Sigmoid colon (tissue), 7 donors: ENCODE measurements at regions of chr7 and their contacts with region 1.

Region 1: DNA sequence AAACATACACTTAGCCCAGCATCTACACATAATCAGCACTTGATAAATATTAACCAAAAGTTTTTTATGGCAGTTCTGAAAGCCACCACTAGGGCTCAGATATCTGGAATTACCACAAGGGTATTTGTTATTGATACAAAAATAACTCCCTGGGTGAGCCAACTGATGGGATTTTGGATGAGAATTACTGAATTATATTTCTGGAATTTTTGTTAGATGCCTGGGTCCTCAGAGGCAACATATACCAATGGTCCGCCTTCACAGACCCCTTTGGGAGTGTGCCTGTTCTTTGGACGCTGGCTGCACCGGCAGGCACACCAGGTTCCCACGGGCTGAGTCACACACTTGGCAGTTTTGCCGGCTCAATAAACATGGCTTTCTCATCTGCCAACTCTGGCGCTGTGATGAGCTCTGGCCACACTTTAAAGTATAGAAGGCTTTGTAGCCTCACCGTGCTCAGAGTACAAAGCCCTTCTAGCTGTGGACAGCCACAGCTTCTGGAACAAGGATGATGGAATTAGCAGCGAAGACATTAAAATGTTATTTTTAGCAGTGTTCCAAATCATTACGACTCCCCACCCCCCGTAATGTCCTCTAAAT is 24.5 kb upstream of the EEPD1 start:
- DNase-seq: peak; percentile 95
- H3K4me3 ChIP-seq: no peak overlapping the region
- H3K27ac ChIP-seq: peak overlapping the region; percentile 64 to 79 (median 74)
- H3K4me1 ChIP-seq: peaks cover 0 to 34% (median 26%) of the 10 kb centered on the region in 4 donors
- H3K27me3 ChIP-seq: no peaks in the 10 kb centered on the region
- CTCF ChIP-seq: peak; percentile 70 to 95 (median 84)
- EP300 ChIP-seq: peak in 3 of 4 donors; percentile 12 to 56 (median 33)
- POLR2A ChIP-seq: no peak

Region 2: DNA sequence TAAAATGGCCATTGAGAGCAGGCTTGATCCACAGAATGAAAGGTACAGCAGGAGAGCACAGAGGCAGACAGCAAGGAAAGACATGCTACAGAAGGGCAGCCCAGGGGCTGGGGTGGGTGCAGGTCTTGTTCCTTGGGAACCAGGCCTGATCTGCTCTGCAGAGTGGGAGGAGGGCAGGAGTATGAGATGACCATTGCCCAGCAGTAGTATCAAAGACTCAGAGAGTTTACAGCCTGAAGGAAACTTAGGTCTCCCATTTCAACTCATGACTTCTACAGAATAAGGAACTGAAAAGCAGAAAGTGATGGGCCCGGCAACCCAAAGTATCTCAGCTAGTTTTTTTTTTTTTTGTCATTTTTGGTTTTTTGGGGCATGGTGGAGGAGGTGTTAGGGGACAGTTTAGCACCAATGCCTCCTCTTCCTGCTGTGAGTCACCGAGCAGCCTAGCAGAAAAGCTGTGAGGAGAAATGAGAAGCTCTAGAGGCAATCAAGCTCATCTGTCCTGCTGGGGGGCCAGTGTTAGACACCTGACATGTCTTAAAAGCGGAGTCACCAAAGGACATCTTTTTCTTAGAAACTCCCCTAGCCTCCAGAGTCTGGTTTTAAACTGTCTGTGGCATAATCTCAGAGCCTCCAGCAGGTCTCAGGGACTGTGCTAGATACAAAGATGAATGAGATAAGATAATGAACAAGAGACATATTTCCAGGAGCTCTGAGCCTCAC is 399.3 kb before region 1 on chr7:
- intact Hi-C with region 1: loop called (anchors 10 kb)
- DNase-seq: no peak
- H3K4me3 ChIP-seq: no peak overlapping the region
- H3K27ac ChIP-seq: peak overlapping the region in 3 of 4 donors; percentile 77 to 88 (median 80)
- H3K4me1 ChIP-seq: peaks cover 0 to 49% (median 42%) of the 10 kb centered on the region in 4 donors
- H3K27me3 ChIP-seq: no peaks in the 10 kb centered on the region
- CTCF ChIP-seq: no peak
- EP300 ChIP-seq: no peak
- POLR2A ChIP-seq: no peak

Region 3: DNA sequence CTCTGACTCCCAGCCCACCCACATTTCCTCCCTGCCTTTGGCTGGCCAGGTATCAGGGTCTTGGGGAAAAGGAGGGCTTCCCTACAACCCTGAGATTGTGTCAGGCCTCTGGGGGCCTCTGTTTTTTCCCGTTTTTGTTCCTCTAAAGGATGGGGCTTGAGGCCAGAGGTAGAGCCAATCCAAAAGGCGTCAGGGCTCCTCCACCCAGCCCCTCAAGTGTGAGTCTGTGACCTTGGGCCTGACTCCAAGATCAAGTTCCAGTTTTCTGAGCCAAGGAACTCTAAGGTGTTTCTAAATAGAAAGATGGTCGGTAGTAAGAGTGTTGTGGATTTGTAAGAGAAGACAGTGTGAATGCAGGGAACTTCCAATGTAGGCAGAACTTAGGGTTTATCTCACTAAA is 31.1 kb after region 1 on chr7:
- intact Hi-C with region 1: no loop called
- DNase-seq: no peak
- H3K4me3 ChIP-seq: no peak overlapping the region
- H3K27ac ChIP-seq: no peak overlapping the region
- H3K4me1 ChIP-seq: peaks cover 0 to 82% (median 76%) of the 10 kb centered on the region in 4 donors
- H3K27me3 ChIP-seq: no peaks in the 10 kb centered on the region
- CTCF ChIP-seq: no peak
- EP300 ChIP-seq: no peak
- POLR2A ChIP-seq: no peak

Region 4: GRCh38 chr7:36280840-36281812 is 152.6 kb after region 1 on chr7:
- intact Hi-C with region 1: loop called (anchors 2 kb)
- DNase-seq: peak; percentile 90
- H3K4me3 ChIP-seq: peak overlapping the region in 2 of 4 donors; percentile 23 to 27
- H3K27ac ChIP-seq: peak overlapping the region; percentile 72 to 86 (median 82)
- H3K4me1 ChIP-seq: peaks cover 0 to 79% (median 70%) of the 10 kb centered on the region in 4 donors
- H3K27me3 ChIP-seq: no peaks in the 10 kb centered on the region
- CTCF ChIP-seq: peak in 1 of 4 experiments; percentile 9
- EP300 ChIP-seq: peak in 1 of 4 donors; percentile 49
- POLR2A ChIP-seq: no peak